Right ventricle myocardium superior (tissue), 1 donor: ENCODE measurements at regions of chr1 and their contacts with region 1.

Region 1: GRCh38 chr1:234722904-234723720 is 113.1 kb upstream of the IRF2BP2 start:
- DNase-seq: peak; percentile 74
- ATAC-seq: peak; percentile 23

Region 2: GRCh38 chr1:234499119-234499942 is 223.8 kb before region 1 on chr1:
- intact Hi-C with region 1: loop called (anchors 10 kb)
- DNase-seq: peak; percentile 96
- ATAC-seq: peak; percentile 98

Region 3: GRCh38 chr1:234610348-234611152 is 112.6 kb before region 1 on chr1:
- intact Hi-C with region 1: loop called (anchors 2 kb)
- DNase-seq: peak; percentile 98
- ATAC-seq: peak; percentile 76

Region 4: DNA sequence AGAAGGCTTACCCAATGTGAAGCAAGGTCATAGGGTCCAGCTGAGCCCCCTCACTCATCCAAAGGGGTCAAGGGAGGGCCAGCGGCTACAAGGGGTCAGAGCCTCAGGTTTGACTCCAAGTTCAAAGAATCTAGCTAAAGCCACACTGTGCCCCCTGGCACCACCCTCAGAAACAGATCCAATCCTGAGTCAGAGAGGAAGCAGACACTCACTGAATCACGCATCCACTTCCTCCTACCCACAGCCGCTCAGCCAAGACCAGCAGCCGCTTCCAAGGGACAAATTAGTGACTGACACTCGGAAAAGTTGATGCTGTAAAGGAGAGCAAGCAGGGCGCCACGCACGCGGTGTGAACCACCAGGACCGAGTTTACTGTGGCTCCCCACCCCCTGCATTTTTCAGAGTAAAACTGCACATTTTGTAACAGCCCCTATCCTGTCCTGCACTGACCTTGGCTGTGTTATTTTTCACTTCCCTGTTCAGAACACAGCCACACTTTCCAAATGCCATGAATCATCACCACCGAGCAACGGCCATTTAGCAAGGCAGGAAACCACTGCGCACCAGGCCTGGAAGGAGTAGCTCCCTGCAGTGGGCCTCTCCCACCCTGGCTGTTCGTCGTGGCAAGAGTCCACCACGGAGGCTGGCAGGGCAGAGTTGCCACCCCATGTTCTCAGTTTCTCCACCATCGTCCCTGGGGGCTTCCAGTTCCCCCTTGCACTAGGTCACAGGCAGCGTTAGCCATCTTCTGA is 257.7 kb after region 1 on chr1:
- intact Hi-C with region 1: loop called (anchors 5 kb)
- DNase-seq: peak; percentile 87
- ATAC-seq: peak; percentile 76

Region 5: GRCh38 chr1:235075188-235075926 is 352.2 kb after region 1 on chr1:
- intact Hi-C with region 1: loop called (anchors 2 kb)
- DNase-seq: peak; percentile 80
- ATAC-seq: peak; percentile 54